ENCODE measurements at regions of chr15 and their contacts with region 1.

Region 1: DNA sequence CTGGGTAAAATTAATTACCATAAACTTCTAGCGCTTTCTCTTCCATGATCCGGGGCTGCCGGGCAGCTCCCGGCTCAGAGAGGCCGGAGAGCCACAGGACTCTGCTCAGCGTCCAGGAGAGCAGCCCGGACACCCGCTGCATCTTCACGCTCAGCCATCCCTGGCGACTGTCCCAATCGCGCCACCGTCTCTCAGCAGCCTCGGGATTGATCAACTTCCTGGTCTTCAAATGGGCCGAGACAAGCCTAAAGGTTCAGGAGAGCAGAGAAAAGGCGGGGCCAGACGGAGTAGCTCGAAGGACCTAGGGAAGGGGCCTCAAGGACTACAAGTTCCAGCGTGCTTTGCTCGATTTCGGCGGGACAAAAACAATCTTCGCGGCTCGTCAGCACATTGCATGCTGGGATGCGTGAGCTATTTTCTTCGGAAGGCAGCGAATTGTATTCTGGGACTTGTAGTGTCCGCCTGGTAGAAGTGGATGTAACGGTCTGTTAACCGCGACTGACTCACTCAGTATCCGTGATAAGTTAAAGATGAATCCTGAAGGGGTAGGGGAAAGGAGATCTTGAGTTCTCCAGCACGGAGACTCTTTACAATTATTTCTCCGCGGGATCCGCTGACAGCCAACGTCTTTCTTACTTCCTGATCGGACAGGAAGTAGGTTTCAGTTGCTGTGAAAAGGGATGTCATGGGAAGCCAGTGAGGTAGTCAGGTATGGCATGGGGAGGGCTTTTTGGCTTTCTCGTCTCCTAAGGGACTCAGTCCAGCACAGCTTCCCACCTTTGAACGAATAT is at the start of gene CIAO2A:
- DNase-seq: peak; percentile 92 to 95
- H3K4me3 ChIP-seq: peak within 1 kb of the TSS; percentile 67
- H3K27ac ChIP-seq: peak within 1 kb of the TSS; percentile 59
- H3K4me1 ChIP-seq: peaks cover 26% of the 10 kb centered on the region
- H3K27me3 ChIP-seq: no peaks in the 10 kb centered on the region
- CTCF ChIP-seq: no peak
- total RNA-seq, gene CIAO2A: 72.1 and 76.3 TPM in 2 replicates

Region 2: DNA sequence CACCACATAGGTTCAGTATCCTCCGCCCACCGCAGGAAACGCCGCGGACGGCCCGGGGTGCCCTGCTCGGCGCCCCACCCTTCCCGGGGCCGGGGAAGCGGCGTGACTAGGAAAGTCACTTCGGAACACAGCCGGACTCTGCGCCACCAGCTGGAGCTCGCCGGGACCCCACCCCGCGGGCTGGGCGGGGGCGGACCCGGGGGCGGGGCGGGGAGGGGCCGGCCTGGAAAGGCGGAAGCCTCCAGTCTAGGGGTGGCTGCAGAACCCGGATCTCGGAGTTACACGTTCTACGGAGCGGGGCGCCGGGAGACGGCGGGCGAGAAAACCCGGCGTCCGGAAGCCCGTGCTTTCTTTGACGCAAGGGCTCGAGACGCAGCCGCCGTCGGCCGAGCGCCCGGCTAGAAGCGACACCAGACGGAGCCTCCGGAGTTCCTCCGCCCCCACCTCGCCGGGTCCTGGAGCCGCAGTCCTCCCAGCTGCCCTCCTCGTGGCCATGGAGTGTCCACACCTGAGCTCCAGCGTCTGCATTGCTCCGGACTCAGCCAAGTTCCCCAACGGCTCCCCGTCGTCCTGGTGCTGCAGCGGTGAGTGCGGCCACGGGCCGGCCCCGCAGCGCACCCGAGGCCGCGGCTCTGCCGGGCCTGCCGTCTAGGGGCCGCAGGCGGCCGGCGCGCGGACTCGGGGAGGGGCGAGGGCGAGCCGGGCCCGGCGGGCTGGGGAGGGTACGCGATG is 589.4 kb before region 1 on chr15 and contains the start of gene USP3:
- CTCF ChIA-PET with region 1: no interaction called
- POLR2A ChIA-PET with region 1: no interaction called
- intact Hi-C with region 1: loop called (anchors 5 kb)
- DNase-seq: peak; percentile 75 to 95
- H3K4me3 ChIP-seq: peak within 1 kb of the TSS; percentile 91
- H3K27ac ChIP-seq: peak within 1 kb of the TSS; percentile 97
- H3K4me1 ChIP-seq: peaks cover 66% of the 10 kb centered on the region
- H3K27me3 ChIP-seq: no peaks in the 10 kb centered on the region
- CTCF ChIP-seq: no peak; the same call in 1 of the 2 replicates
- total RNA-seq, gene USP3: 57.5 and 59.7 TPM in 2 replicates

Region 3: DNA sequence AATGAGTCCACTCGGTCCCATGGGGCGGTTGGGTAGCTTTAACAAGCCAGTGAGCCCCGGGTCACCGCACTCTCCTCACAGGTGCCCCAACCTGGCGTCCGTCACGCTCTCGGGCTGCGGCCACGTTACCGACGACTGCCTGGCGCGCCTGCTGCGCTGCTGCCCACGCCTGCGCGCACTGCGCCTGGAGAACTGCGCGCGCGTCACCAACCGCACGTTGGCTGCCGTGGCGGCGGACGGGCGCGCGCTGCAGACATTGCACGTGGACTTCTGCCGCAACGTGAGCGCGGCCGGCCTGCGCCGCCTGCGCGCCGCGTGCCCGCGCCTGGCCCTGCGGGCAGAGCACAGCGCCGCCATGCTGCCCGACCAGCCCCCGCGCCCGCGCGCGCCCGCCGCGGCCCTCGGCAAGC is 493.2 kb before region 1 on chr15:
- CTCF ChIA-PET with region 1: no interaction called
- POLR2A ChIA-PET with region 1: interaction called, 7 read pairs
- intact Hi-C with region 1: loop called (anchors 5 kb)
- DNase-seq: peak; percentile 63 to 91
- H3K4me3 ChIP-seq: peak overlapping the region; percentile 82
- H3K27ac ChIP-seq: peak overlapping the region; percentile 56; the same call in 1 of the 2 replicates
- H3K4me1 ChIP-seq: peaks cover 6% of the 10 kb centered on the region; the same call in 1 of the 2 replicates
- H3K27me3 ChIP-seq: no peaks in the 10 kb centered on the region
- CTCF ChIP-seq: no peak

Region 4: DNA sequence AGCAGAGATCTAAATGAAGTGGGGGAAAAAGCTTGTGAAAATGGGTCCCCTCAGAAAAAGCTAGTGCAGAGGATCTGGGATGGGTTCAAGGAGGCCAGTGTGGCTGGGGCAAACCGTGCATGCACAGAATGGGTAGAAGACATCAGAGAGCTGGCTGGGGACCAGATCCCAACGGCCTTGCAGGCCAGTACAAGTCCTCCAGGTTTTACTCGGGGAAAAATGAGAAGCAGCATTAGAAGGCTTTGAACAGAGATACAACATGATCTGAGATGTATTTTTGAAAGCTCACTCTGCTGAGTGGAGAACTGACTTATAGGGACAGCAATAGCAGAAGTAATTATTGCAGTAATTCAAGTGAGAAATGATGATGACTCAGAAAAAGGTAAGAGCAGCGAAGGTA is 374.5 kb before region 1 on chr15:
- CTCF ChIA-PET with region 1: interaction called, 19 read pairs
- POLR2A ChIA-PET with region 1: no interaction called
- intact Hi-C with region 1: no loop called
- DNase-seq: no peak
- H3K4me3 ChIP-seq: no peak overlapping the region
- H3K27ac ChIP-seq: no peak overlapping the region
- H3K4me1 ChIP-seq: peaks cover 18% of the 10 kb centered on the region
- H3K27me3 ChIP-seq: no peaks in the 10 kb centered on the region
- CTCF ChIP-seq: no peak

Region 5: DNA sequence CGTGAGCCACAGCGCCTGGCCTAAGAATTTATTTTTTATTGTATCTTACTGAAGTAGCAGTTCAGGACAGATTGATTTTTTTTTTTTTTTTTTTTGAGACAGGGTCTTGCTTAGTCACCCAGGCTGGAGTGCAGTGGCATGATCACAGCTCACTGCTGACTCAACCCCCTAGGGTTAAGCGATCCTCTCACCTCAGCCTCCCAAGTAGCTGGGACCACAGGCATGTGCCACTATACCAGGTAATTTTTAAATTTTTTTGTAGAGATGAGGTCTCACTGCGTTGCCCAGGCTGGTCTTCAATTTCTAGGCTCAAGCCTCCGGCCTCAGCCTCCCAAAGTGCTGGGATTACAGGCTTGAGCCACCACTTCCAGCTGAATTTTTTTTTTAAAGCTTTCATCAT is 160.3 kb before region 1 on chr15:
- CTCF ChIA-PET with region 1: no interaction called
- POLR2A ChIA-PET with region 1: no interaction called
- intact Hi-C with region 1: no loop called
- DNase-seq: peak in 1 of 2 experiments; percentile 8
- H3K4me3 ChIP-seq: no peak overlapping the region
- H3K27ac ChIP-seq: no peak overlapping the region
- H3K4me1 ChIP-seq: no peaks in the 10 kb centered on the region
- H3K27me3 ChIP-seq: no peaks in the 10 kb centered on the region
- CTCF ChIP-seq: no peak

Region 6: GRCh38 chr15:64050281-64051092 is 43.3 kb before region 1 on chr15:
- CTCF ChIA-PET with region 1: no interaction called
- POLR2A ChIA-PET with region 1: no interaction called
- intact Hi-C with region 1: no loop called
- DNase-seq: no peak
- H3K4me3 ChIP-seq: no peak overlapping the region
- H3K27ac ChIP-seq: no peak overlapping the region
- H3K4me1 ChIP-seq: peaks cover 7% of the 10 kb centered on the region; the same call in 1 of the 2 replicates
- H3K27me3 ChIP-seq: no peaks in the 10 kb centered on the region
- CTCF ChIP-seq: no peak

Region 7: DNA sequence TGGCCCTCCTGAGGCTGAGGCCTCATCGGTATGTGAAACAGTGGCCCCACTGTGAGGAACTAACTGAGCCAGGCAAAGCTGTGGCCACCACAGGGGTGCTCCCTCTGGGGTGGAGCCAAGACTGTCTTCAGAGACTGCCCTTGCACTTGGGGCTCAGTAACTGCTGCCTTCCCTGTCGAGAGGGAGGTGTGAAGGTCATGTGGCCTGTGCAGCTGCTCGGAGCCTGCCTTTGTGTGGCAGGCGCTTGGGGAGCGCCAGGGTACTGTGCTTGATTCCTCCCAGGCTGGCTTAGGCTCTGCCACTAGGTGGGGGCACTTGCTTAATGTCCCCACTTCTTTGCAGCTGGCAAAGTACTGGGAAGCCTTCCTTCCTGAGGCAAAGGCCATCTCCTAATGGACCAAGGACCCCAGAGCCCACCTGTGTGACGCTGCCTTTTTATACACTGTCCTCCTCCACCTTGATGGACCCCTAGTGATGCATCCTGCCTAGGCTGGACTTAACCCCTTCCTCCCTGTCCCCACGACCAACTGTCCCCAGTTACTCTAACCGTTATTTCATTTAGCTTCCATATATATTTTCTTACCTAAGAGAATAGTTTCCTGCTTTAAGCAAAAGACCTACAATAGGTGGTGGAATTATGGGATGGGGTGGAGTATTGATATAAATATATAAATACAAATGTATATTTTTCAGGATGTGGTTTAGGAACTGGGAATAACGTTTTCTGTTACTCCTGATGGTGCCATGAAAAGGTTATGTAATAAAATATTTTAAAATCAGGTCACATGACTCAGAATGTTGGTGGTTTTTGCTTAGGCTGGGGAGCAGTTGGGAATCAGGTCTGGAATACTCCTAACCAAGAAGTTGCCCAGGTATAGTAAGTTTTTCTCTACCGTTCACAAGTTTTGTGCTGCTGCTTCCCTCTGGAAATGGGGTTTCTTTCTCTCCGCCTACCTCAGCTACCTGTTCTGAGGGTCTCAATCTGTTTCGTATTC is 43.7 kb after region 1 on chr15:
- CTCF ChIA-PET with region 1: no interaction called
- POLR2A ChIA-PET with region 1: interaction called, 24 read pairs
- intact Hi-C with region 1: no loop called
- DNase-seq: no peak
- H3K4me3 ChIP-seq: no peak overlapping the region
- H3K27ac ChIP-seq: no peak overlapping the region
- H3K4me1 ChIP-seq: no peaks in the 10 kb centered on the region
- H3K27me3 ChIP-seq: no peaks in the 10 kb centered on the region
- CTCF ChIP-seq: no peak

Region 8: GRCh38 chr15:64153480-64154367 is 59.9 kb after region 1 on chr15:
- CTCF ChIA-PET with region 1: interaction called, 4 read pairs
- POLR2A ChIA-PET with region 1: no interaction called
- intact Hi-C with region 1: loop called (anchors 5 kb)
- DNase-seq: peak; percentile 72 to 89
- H3K4me3 ChIP-seq: no peak overlapping the region
- H3K27ac ChIP-seq: no peak overlapping the region; the same call in 1 of the 2 replicates
- H3K4me1 ChIP-seq: no peaks in the 10 kb centered on the region
- H3K27me3 ChIP-seq: no peaks in the 10 kb centered on the region
- CTCF ChIP-seq: peak; percentile 90

Region 9: DNA sequence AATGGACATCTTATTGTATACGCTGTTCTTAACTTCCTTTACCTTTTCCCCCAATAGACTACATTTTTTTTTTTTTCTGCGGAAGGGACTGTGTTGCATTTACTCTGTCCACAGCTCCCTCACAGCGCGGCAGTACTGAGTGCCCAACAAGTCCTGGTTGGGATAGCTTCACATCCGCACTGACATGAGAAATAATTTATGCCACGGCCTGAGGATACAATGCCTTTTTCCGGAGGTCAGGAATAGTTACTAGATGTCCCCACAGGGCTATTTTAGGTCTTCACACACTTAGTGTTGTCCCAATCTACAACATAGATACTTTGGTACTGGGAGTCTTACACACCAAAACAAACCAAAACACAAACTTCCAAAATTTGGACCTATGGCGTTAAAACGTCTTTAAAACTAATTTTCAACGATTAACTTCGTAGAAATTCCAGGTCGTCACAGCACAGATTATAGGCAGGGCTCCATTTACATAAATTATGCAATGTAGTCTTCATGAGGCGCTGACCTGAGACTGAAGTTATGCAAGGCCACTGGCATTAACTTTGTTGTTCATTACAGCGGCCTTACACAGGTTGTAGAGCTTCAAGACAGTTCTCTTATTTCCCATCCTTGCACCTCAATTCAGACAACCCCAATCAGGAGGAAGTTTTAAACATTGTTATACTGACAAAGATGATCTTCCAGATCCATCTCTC is 70.0 kb after region 1 on chr15:
- CTCF ChIA-PET with region 1: no interaction called
- POLR2A ChIA-PET with region 1: no interaction called
- intact Hi-C with region 1: no loop called
- DNase-seq: no peak
- H3K4me3 ChIP-seq: peak overlapping the region; percentile 45; the same call in 1 of the 2 replicates
- H3K27ac ChIP-seq: peak overlapping the region; percentile 33
- H3K4me1 ChIP-seq: no peaks in the 10 kb centered on the region; the same call in none of the 2 replicates
- H3K27me3 ChIP-seq: no peaks in the 10 kb centered on the region
- CTCF ChIP-seq: no peak

Region 10: DNA sequence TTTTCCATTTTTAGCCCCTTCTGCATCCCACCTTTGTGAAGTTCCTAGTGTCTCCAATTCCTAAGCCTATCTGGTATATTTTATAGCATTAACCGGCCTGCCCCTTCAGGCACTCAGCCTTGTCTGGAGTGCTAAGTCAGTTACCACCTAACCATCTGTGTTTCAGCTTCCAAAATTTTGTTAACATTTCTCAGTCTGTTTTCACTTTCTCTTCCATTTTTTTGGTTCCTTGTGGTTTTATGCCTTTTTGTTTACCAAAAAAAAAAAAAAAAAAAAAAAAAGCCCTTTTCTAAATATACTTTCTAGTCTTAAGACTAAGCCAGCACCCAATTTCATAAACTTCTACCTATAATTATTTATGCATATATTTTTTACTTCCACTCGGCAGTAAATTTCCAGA is 169.7 kb after region 1 on chr15:
- CTCF ChIA-PET with region 1: no interaction called
- POLR2A ChIA-PET with region 1: no interaction called
- intact Hi-C with region 1: no loop called
- DNase-seq: no peak
- H3K4me3 ChIP-seq: no peak overlapping the region
- H3K27ac ChIP-seq: no peak overlapping the region
- H3K4me1 ChIP-seq: no peaks in the 10 kb centered on the region
- H3K27me3 ChIP-seq: no peaks in the 10 kb centered on the region
- CTCF ChIP-seq: no peak

Measured in PC-9 (cell line).